ENCODE measurements at regions of chr10 and their contacts with region 1.

Region 1: DNA sequence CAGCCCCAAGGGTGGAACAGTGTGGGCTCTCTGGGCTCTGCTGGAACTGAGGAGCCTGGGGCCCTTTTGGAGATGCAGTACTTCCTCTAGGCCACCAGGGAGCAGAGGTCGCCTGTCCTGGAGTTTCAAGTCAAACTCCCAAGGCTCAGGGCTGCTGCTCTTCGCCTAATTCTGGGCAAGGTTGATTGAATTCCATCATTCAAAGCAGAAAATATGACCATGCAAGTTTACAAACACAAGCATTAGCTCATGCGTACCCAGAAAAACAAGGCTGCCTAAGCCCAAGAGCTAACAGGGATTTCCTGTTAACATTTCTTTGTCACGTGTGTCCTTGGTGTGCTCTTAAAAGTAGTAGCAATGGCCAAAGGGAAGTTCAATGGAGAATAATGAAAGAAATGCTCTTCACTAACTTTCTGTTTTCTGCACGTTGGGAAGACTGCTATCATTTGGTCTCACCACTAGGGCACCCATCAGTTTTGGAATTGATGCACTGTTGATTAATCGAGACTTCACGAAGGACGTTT is 20.1 kb downstream of the LDB3 start:
- DNase-seq: peak; percentile 86
- H3K4me3 ChIP-seq: no peak overlapping the region
- H3K27ac ChIP-seq: no peak overlapping the region
- H3K4me1 ChIP-seq: peaks cover 7% of the 10 kb centered on the region
- H3K27me3 ChIP-seq: no peaks in the 10 kb centered on the region
- CTCF ChIP-seq: peak; percentile 77

Region 2: GRCh38 chr10:86521678-86522509 is 166.6 kb before region 1 on chr10 and contains the start of gene WAPL:
- CTCF ChIA-PET with region 1: no interaction called
- POLR2A ChIA-PET with region 1: no interaction called
- intact Hi-C with region 1: no loop called
- DNase-seq: peak; percentile 96
- H3K4me3 ChIP-seq: peak within 1 kb of the TSS; percentile 99
- H3K27ac ChIP-seq: peak within 1 kb of the TSS; percentile 96
- H3K4me1 ChIP-seq: peaks cover 31% of the 10 kb centered on the region
- H3K27me3 ChIP-seq: no peaks in the 10 kb centered on the region
- CTCF ChIP-seq: no peak
- total RNA-seq, gene WAPL: 47.0 and 49.4 TPM in 2 replicates

Region 3: GRCh38 chr10:86553639-86554038 is 134.8 kb before region 1 on chr10:
- CTCF ChIA-PET with region 1: no interaction called
- POLR2A ChIA-PET with region 1: no interaction called
- intact Hi-C with region 1: no loop called
- DNase-seq: no peak
- H3K4me3 ChIP-seq: no peak overlapping the region
- H3K27ac ChIP-seq: no peak overlapping the region
- H3K4me1 ChIP-seq: no peaks in the 10 kb centered on the region
- H3K27me3 ChIP-seq: no peaks in the 10 kb centered on the region
- CTCF ChIP-seq: no peak

Region 4: GRCh38 chr10:86899670-86900276 is 211.3 kb after region 1 on chr10:
- CTCF ChIA-PET with region 1: interaction called, 15 read pairs
- POLR2A ChIA-PET with region 1: no interaction called
- intact Hi-C with region 1: loop called (anchors 1 kb)
- DNase-seq: peak; percentile 83
- H3K4me3 ChIP-seq: no peak overlapping the region
- H3K27ac ChIP-seq: no peak overlapping the region
- H3K4me1 ChIP-seq: peaks cover 26% of the 10 kb centered on the region
- H3K27me3 ChIP-seq: no peaks in the 10 kb centered on the region
- CTCF ChIP-seq: peak; percentile 82

Region 5: DNA sequence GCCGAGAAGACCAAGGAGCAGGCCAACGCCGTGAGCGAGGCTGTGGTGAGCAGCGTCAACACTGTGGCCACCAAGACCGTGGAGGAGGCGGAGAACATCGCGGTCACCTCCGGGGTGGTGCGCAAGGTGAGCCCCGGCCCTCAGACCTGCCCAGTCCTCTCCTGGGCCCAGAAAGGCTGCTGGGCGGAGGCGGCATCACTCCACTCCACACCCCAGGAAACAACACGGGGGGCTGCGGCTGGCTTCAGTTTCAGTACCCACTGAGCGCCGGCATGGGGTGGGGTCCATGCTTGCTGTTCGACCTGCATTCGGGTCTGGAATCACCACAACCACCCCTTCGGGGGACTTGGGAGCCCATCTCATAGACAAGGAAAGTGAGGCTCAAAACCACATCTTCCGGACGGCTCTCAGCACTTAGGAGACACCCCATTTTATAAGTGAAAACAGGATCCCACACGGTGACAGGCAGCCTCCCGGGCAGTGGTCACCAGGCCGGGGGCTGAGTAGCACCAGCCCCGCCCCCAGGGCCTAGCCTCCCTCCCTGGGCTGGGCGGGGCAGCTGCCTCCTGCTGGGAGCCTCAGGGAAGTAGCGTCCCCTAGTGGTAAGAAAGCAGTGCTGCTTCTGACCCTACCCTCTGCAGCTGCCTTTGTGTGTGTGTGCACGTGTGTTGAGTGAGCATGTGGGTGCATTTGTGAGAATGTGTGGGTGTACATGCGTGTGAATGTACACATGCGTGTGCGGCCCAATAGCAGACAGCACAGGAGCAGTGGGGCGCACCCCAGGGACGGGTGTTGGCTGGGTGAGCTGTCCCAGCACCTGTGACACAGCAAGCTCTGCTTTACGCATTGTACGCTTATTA is 271.8 kb after region 1 on chr10:
- CTCF ChIA-PET with region 1: no interaction called
- POLR2A ChIA-PET with region 1: no interaction called
- intact Hi-C with region 1: loop called (anchors 10 kb)
- DNase-seq: peak; percentile 60
- H3K4me3 ChIP-seq: no peak overlapping the region
- H3K27ac ChIP-seq: no peak overlapping the region
- H3K4me1 ChIP-seq: peaks cover 6% of the 10 kb centered on the region
- H3K27me3 ChIP-seq: no peaks in the 10 kb centered on the region
- CTCF ChIP-seq: peak; percentile 88

Measured in A673 (cell line).